Activated B cell treated with CpG ODN at 0.5 μM for 24 hours (primary cell): ENCODE measurements at regions of chr11 and their contacts with region 1.

Region 1: DNA sequence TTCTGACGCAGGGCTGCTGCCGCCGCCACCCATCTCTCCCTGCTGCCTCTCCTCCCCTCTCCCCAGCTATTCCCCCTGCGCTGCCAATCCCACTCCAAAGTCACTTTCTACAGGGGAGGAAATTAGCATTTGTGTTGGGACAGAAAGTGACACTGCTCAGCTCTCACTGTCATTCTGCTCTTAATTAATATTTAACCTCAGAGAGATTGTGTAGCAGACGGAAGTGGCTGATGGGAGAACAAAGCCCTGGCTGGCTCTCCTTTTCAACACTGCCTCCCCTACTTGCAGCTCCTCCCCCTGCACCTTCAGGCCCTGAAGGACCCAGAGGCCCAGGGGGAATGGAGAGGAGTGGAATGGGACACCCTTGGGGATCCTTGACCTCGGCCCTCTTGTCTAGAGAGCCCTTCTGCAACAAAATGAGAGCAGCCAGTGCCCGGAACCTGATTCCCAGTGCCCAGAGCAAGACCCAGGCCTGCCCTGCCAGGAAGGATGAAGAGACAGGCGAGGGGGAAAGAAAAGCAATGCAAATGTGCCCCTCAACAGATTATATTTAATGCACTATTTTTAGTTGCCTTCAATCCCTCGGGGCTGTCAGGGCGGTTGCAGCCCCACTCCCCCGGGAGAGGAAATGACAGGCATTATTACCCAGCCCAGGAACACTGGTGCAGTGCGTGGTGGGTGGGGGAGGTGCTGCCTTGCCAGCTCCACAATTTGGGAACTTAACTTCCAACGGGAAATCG is 14.6 kb upstream of the NRGN start:
- DNase-seq: peak; percentile 47
- ATAC-seq: peak; percentile 87
- H3K4me3 Mint-ChIP-seq: peak overlapping the region; percentile 73
- H3K27ac Mint-ChIP-seq: peak overlapping the region; percentile 50
- H3K4me1 Mint-ChIP-seq: peaks cover 56% of the 10 kb centered on the region
- H3K27me3 Mint-ChIP-seq: peaks cover 10% of the 10 kb centered on the region
- CTCF ChIP-seq: no peak

Region 2: GRCh38 chr11:123601136-123601535 is 1124.0 kb before region 1 on chr11:
- CTCF ChIA-PET with region 1: no interaction called
- POLR2A ChIA-PET with region 1: no interaction called
- intact Hi-C with region 1: no loop called
- DNase-seq: no peak
- ATAC-seq: no peak
- H3K4me3 Mint-ChIP-seq: no peak overlapping the region
- H3K27ac Mint-ChIP-seq: no peak overlapping the region
- H3K4me1 Mint-ChIP-seq: no peaks in the 10 kb centered on the region
- H3K27me3 Mint-ChIP-seq: no peaks in the 10 kb centered on the region
- CTCF ChIP-seq: no peak

Region 3: DNA sequence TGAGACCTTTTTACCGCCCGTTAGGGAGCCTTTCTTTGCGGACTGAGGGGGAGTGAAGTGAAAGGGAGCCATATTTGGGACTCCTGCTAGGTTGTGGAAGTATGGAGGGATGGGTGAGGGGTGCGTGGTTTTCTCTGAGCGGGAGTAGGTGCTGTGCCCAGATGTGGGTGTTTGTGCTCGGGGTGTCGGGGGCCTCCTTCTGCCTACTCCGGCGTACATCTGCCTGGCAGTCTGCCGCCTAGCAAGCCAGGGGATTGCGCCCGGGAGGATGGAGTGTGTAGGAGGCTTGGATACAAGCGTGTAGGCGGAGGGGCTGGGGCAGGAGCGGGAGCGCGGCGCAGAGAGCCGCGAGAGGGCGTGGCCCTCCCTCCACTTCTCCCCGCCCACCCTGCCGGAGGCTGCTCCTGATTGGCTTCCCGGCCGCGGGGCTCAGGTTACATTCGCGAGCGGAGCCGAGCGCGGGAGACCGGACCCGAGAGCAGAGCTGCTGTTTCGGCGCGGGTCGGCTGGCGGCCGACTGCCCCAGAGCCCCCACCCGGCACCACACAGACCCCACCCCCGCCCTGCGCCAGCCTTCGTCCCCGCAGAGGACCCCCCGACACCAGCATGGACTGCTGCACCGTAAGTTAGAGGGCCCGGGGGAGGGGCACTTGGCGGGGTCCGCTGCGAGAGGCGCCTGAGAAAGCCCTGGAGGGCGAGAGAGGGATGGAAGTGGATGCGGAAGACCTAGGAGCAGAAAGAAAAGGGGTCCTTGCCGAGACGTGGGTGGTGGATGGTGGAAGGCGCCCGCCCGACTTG is 14.5 kb after region 1 on chr11 and contains the start of gene NRGN:
- CTCF ChIA-PET with region 1: interaction called, 3 read pairs
- POLR2A ChIA-PET with region 1: no interaction called
- intact Hi-C with region 1: loop called (anchors 1 kb)
- DNase-seq: peak; percentile 75
- ATAC-seq: peak; percentile 98
- H3K4me3 Mint-ChIP-seq: peak within 1 kb of the TSS; percentile 83
- H3K27ac Mint-ChIP-seq: no peak within 1 kb of the TSS
- H3K4me1 Mint-ChIP-seq: peaks cover 19% of the 10 kb centered on the region
- H3K27me3 Mint-ChIP-seq: no peaks in the 10 kb centered on the region
- CTCF ChIP-seq: no peak
- total RNA-seq, gene NRGN: 0.69 and 1.0 TPM in 2 replicates

Region 4: GRCh38 chr11:124746621-124747243 is 21.6 kb after region 1 on chr11:
- CTCF ChIA-PET with region 1: interaction called, 4 read pairs
- POLR2A ChIA-PET with region 1: interaction called, 16 read pairs
- intact Hi-C with region 1: loop called (anchors 1 kb)
- DNase-seq: peak; percentile 73
- ATAC-seq: peak; percentile 89
- H3K4me3 Mint-ChIP-seq: peak overlapping the region; percentile 97
- H3K27ac Mint-ChIP-seq: peak overlapping the region; percentile 93
- H3K4me1 Mint-ChIP-seq: peaks cover 37% of the 10 kb centered on the region
- H3K27me3 Mint-ChIP-seq: peaks cover 2% of the 10 kb centered on the region
- CTCF ChIP-seq: no peak